ENCODE measurements at regions of chr11 and their contacts with region 1.

Region 1: GRCh38 chr11:44911029-44911814 is 39.5 kb downstream of the TP53I11 start:
- DNase-seq: peak; percentile 29
- H3K4me3 ChIP-seq: no peak overlapping the region
- CTCF ChIP-seq: peak; percentile 61

Region 2: GRCh38 chr11:44551456-44552139 is 359.6 kb before region 1 on chr11:
- CTCF ChIA-PET with region 1: interaction called, 72 read pairs
- POLR2A ChIA-PET with region 1: no interaction called
- DNase-seq: no peak
- H3K4me3 ChIP-seq: no peak overlapping the region
- CTCF ChIP-seq: no peak

Region 3: DNA sequence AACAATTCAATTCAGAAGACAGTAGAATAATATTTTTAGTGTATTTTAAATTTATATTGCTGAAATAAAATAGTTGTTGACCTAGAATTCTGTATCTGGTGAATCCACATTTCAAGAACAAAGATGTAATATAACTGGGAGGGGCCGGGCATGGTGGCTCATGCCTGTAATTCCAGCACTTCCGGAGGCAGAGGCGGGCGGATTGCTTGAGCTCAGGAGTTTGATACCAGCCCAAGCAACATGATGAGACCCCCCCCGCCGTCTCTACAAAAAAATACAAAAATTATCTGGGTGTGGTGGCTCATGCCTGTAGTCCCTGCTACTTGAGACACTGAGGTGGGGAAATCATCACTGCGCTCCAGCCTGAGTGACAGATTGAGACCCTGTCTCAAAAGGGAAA is 273.2 kb before region 1 on chr11:
- CTCF ChIA-PET with region 1: interaction called, 659 read pairs
- POLR2A ChIA-PET with region 1: no interaction called
- DNase-seq: no peak
- H3K4me3 ChIP-seq: no peak overlapping the region
- CTCF ChIP-seq: no peak

Region 4: DNA sequence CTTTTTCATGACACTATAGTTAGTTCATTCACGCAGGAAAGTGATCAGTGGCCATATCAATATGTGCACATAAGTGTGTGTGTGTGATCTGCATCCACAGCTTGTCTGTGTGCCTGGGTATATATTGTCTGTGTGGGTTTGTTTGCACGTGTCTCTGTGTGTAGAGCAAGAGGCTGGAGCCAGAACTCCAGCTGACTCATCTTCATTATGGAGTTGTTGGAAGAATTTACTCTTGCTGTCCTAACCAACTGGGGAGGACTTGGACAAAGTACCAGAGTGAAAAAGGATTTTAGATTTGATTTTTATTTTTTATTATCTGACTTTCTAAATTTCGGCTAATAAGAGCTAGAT is 24.5 kb before region 1 on chr11:
- CTCF ChIA-PET with region 1: interaction called, 75 read pairs
- POLR2A ChIA-PET with region 1: no interaction called
- DNase-seq: no peak
- H3K4me3 ChIP-seq: no peak overlapping the region
- CTCF ChIP-seq: no peak

Region 5: GRCh38 chr11:44899959-44900358 is 11.3 kb before region 1 on chr11:
- CTCF ChIA-PET with region 1: interaction called, 75 read pairs
- POLR2A ChIA-PET with region 1: no interaction called
- DNase-seq: no peak
- H3K4me3 ChIP-seq: no peak overlapping the region
- CTCF ChIP-seq: no peak

Region 6: DNA sequence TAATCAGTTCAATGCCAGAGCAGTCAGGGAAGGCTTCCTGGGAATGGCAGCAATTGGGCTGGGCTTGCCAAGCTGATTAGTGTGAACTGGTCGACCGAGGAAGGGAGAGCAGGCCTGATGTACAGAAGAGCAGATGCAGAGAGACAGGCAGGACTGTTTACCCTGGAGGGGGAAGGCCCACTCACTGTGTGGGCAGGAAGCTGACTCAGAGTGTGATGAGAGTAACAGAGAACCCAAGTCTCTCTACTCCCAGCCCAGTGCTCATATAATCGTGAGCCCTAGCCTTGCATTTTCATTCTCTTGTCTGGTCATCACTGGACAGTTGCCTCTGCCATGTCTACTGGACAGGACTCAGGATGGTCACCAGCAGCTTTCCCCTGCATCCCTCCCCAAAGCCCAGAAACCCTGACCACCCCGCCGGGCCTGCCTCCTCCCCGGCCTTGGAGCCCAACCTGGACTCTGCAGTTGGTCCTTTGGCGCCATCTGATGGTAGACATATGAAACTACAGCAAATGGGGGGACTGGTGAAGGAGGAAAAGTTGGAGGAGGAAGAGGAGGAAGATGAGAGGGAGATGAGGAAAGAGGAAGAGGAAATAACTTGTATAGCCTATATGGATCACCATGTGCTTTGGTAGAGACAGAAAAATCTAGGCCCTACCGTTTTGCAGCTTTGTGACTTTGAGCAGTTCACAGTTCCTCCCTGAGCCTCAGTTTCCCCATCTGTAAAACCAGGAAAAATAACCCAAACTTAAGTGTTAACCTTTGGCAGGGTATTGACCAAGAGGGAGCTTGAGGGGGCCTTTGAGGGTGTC is 191.8 kb after region 1 on chr11:
- CTCF ChIA-PET with region 1: interaction called, 27 read pairs
- POLR2A ChIA-PET with region 1: no interaction called
- DNase-seq: no peak
- H3K4me3 ChIP-seq: peak overlapping the region; percentile 29; the same call in 1 of the 2 replicates
- CTCF ChIP-seq: peak; percentile 90